ENCODE measurements at regions of chr3 and their contacts with region 1.

Region 1: GRCh38 chr3:65170390-65171042 is 482.7 kb upstream of the ADAMTS9 start:
- DNase-seq: peak; percentile 81 to 91
- ATAC-seq: peak; percentile 68 to 98 (median 94)
- H3K4me3 ChIP-seq: no peak overlapping the region
- H3K27ac ChIP-seq: peak overlapping the region in 9 of 10 donors; percentile 16 to 91 (median 76)
- H3K4me1 ChIP-seq: peaks cover 5 to 32% (median 19%) of the 10 kb centered on the region in 9 donors
- H3K27me3 ChIP-seq: no peaks in the 10 kb centered on the region
- CTCF ChIP-seq: peak; percentile 17 to 69 (median 55)

Region 2: GRCh38 chr3:64796607-64797399 is 373.7 kb before region 1 on chr3:
- intact Hi-C with region 1: loop called in 1 of 10 experiments (anchors 10 kb)
- DNase-seq: no peak
- ATAC-seq: peak in 3 of 8 donors; percentile 25 to 48 (median 37)
- H3K4me3 ChIP-seq: no peak overlapping the region
- H3K27ac ChIP-seq: peak overlapping the region in 4 of 10 donors; percentile 1 to 42 (median 28)
- H3K4me1 ChIP-seq: peaks cover 0 to 37% (median 7%) of the 10 kb centered on the region in 9 donors
- H3K27me3 ChIP-seq: no peaks in the 10 kb centered on the region
- CTCF ChIP-seq: no peak

Region 3: GRCh38 chr3:64908292-64908691 is 262.2 kb before region 1 on chr3:
- intact Hi-C with region 1: loop called in 3 of 10 experiments (anchors 10 kb)
- DNase-seq: peak in 1 of 2 donors; percentile 73
- ATAC-seq: peak; percentile 76 to 94 (median 91)
- H3K4me3 ChIP-seq: no peak overlapping the region
- H3K27ac ChIP-seq: peak overlapping the region in 9 of 10 donors; percentile 5 to 84 (median 75)
- H3K4me1 ChIP-seq: peaks cover 1 to 69% (median 46%) of the 10 kb centered on the region in 9 donors
- H3K27me3 ChIP-seq: no peaks in the 10 kb centered on the region
- CTCF ChIP-seq: no peak

Region 4: DNA sequence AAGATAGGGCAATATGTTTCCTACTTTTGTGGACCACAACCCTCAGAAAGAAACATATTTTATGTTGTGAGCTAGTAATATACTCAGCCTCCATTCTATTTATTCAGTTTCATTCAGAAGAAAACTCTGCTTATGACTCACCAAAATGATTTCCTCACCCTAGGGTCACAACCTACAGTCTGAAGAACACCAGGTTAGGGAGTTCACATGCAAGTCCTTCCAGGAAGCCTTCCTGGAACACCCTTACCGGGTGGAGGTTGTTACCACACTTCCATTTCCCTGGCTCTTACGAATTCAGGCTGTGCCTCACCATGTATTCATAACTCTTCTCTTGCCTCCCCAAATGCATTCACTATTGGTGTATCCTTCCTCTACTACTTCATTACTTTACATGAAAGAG is 254.7 kb before region 1 on chr3:
- intact Hi-C with region 1: loop called in 3 of 10 experiments (anchors 5 to 10 kb)
- DNase-seq: no peak
- ATAC-seq: peak in 6 of 8 donors; percentile 32 to 83 (median 64)
- H3K4me3 ChIP-seq: no peak overlapping the region
- H3K27ac ChIP-seq: peak overlapping the region in 7 of 10 donors; percentile 26 to 78 (median 42)
- H3K4me1 ChIP-seq: peaks cover 0 to 71% (median 30%) of the 10 kb centered on the region in 9 donors
- H3K27me3 ChIP-seq: no peaks in the 10 kb centered on the region
- CTCF ChIP-seq: no peak

Region 5: DNA sequence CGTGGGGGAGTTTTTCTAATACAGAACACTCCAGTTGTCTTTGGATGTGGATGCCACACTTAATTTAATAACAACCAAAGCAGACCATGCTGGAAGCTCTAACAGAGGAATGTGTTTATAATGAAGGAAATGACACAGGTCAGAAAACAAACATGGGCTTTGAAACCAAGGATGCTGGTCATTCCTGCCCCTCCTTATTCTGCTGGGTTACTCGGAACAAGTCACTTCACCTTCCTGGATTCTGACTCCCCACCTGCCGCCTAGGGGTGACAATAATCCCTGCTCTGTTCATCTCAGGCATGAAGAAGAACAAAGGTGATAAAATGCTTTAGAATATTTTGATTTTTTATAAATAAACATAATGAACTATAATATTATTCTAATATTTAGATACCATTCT is 241.8 kb before region 1 on chr3:
- intact Hi-C with region 1: loop called in 2 of 10 experiments (anchors 10 kb)
- DNase-seq: peak in 1 of 2 donors; percentile 24
- ATAC-seq: peak; percentile 57 to 82 (median 76)
- H3K4me3 ChIP-seq: no peak overlapping the region
- H3K27ac ChIP-seq: peak overlapping the region in 5 of 10 donors; percentile 33 to 71 (median 52)
- H3K4me1 ChIP-seq: peaks cover 0 to 22% (median 6%) of the 10 kb centered on the region in 9 donors
- H3K27me3 ChIP-seq: no peaks in the 10 kb centered on the region
- CTCF ChIP-seq: peak in 7 of 9 donors; percentile 10 to 47 (median 28)

Region 6: GRCh38 chr3:65052101-65052500 is 118.4 kb before region 1 on chr3:
- intact Hi-C with region 1: no loop called
- DNase-seq: no peak
- ATAC-seq: no peak
- H3K4me3 ChIP-seq: no peak overlapping the region
- H3K27ac ChIP-seq: no peak overlapping the region
- H3K4me1 ChIP-seq: no peaks in the 10 kb centered on the region
- H3K27me3 ChIP-seq: no peaks in the 10 kb centered on the region
- CTCF ChIP-seq: no peak

Region 7: DNA sequence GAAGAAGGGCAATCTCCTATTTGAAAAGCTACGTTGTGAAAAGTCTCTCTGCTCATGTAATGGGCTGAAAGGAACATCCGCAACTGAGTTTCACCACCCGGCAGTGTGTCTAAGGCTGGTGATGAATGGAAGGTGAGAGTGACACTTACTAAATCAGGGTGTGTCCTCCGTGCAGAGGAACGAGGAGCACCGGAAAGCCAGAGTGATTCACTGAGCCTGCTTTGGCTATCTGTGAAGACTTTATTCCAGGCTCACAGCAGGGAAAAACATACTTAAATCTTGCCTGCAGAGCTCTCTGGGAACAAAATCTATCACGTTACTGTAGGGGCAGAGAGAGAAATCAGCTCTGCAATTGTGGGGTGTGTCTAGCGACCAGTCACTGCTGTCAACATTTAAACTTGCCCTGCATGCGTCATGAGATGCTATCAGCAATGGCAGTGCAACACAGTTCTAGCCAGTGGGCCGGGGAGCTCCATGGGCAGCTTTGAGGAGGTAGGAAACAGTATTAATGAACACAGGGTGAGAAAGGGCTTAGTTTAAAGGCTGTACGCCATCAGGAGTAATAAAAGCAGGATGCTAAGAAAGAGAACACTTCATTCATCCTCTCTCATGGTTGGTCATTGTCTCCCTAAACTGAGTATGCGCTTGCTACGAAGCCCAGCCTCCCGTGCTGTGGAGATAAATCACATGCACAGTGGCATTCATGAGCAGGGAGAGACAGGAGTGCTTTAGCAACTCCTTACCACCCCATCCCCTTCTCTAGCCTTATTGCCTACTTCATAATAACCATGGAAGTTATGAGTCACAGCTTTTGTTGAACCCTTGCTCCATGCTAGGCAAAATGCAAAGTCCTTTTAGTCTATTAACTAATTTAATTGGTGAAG is 60.0 kb after region 1 on chr3:
- intact Hi-C with region 1: no loop called
- DNase-seq: no peak
- ATAC-seq: no peak
- H3K4me3 ChIP-seq: no peak overlapping the region
- H3K27ac ChIP-seq: no peak overlapping the region
- H3K4me1 ChIP-seq: no peaks in the 10 kb centered on the region
- H3K27me3 ChIP-seq: no peaks in the 10 kb centered on the region
- CTCF ChIP-seq: no peak

Region 8: GRCh38 chr3:65245133-65246063 is 74.9 kb after region 1 on chr3:
- intact Hi-C with region 1: no loop called
- DNase-seq: no peak
- ATAC-seq: peak in 4 of 8 donors; percentile 25 to 48 (median 42)
- H3K4me3 ChIP-seq: no peak overlapping the region
- H3K27ac ChIP-seq: no peak overlapping the region
- H3K4me1 ChIP-seq: peaks cover 0 to 11% (median 5%) of the 10 kb centered on the region in 9 donors
- H3K27me3 ChIP-seq: peaks cover 0 to 3% (median 0%) of the 10 kb centered on the region in 7 donors
- CTCF ChIP-seq: peak in 8 of 9 donors; percentile 27 to 71 (median 60)

Region 9: GRCh38 chr3:65412588-65412987 is 242.1 kb after region 1 on chr3:
- intact Hi-C with region 1: loop called in 2 of 10 experiments (anchors 10 kb)
- DNase-seq: peak; percentile 40 to 87
- ATAC-seq: peak; percentile 79 to 95 (median 89)
- H3K4me3 ChIP-seq: no peak overlapping the region
- H3K27ac ChIP-seq: peak overlapping the region in 4 of 10 donors; percentile 67 to 80 (median 70)
- H3K4me1 ChIP-seq: peaks cover 14 to 61% (median 48%) of the 10 kb centered on the region in 9 donors
- H3K27me3 ChIP-seq: no peaks in the 10 kb centered on the region
- CTCF ChIP-seq: peak in 7 of 9 donors; percentile 27 to 70 (median 42)

Region 10: DNA sequence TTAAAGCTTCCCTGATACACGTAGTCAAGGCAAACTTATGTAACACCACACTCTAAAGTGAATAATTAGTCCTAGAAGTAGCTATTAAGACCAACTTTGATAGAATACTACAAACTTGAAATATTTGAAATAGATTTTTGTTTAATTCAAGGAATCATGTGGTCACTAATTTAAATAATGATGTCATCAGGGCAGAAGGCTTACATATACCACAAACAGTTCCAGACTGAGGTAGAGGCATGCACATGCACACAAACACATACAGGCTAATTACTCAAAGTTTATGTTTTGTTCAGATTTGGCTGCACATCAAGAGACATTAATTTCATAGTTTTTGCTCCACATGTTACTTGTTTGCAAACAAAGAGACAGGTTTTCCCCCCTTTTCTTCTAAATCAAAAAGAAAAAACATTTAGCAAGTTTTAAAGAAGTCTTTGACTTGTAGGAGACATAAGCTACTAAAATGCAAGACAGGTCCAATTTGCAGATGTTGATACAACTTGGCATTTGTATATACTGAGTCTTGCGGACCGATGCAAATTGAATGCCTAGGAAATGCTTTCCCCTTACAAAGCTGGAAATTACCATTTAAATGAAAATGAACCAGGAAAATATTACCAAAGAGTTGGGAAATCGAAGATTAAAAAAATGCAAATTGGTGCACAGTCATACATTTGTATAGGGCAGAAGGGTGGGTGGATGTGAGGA is 273.4 kb after region 1 on chr3:
- intact Hi-C with region 1: no loop called
- DNase-seq: no peak
- ATAC-seq: no peak
- H3K4me3 ChIP-seq: no peak overlapping the region
- H3K27ac ChIP-seq: no peak overlapping the region
- H3K4me1 ChIP-seq: peaks cover 0 to 13% (median 6%) of the 10 kb centered on the region in 9 donors
- H3K27me3 ChIP-seq: no peaks in the 10 kb centered on the region
- CTCF ChIP-seq: no peak

Measured in heart right ventricle (tissue), 16 donors.